Natural killer cell (primary cell): ENCODE measurements at regions of chr2 and their contacts with region 1.

Region 1: GRCh38 chr2:127701193-127701650 is at the start of gene SFT2D3:
- DNase-seq: peak; percentile 83 to 95
- ATAC-seq: peak; percentile 75 to 87 (median 76)
- H3K4me3 ChIP-seq: peak within 1 kb of the TSS; percentile 61
- H3K4me3 Mint-ChIP-seq: peak within 1 kb of the TSS; percentile 93
- H3K27ac ChIP-seq: peak within 1 kb of the TSS; percentile 94
- H3K27ac Mint-ChIP-seq: peak within 1 kb of the TSS; percentile 97 to 98
- H3K4me1 ChIP-seq: peaks cover 33% of the 10 kb centered on the region
- H3K4me1 Mint-ChIP-seq: peaks cover 35 to 36% of the 10 kb centered on the region in 2 donors
- H3K27me3 ChIP-seq: no peaks in the 10 kb centered on the region
- H3K27me3 Mint-ChIP-seq: no peaks in the 10 kb centered on the region
- CTCF ChIP-seq: no peak
- total RNA-seq, gene SFT2D3: 5.5 to 6.6 (median 6.4) TPM

Region 2: DNA sequence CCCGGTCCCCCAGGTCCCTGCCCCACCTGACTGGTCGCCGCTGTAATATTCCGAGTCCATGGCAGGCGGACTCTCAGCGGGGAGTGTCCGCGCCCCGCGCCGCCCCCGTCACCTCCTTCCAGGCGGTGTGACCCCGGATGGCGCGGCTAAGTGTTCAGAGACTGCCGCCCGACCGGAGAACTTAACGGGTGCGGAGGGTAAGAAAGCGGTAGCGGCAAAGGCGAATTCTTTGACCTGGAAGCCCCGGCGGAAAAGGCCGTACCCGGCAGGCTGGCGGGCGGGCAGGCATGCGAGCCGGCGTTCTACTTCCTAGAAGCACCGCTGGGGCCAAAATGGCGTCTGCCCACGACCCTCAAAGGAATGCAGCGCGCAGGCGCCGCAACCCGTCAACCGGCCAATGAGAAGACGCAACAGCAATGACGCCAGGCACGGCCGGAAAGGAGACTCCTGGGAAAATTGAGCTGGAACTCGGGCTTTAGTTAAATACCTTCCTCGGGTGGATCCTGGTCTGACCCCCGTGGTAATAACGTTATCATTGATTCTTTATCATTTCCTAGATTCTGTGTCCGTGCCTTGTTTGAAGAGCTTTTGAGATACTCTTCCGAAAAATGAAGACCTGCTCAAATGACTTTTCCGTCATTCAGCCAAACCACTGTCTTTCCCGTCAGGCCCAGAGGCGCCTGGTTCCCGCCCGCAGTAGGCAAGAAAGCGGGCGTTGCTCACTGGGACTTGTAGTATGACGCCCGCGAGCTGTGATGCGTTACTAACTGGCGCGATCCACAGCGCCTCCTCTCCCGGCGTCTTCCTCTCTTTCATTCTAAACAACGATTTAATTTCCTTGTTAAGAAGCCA is 174.8 kb before region 1 on chr2 and contains the start of gene IWS1:
- intact Hi-C with region 1: loop called (anchors 1 kb)
- DNase-seq: peak; percentile 90 to 98
- ATAC-seq: peak; percentile 87 to 94 (median 90)
- H3K4me3 ChIP-seq: peak within 1 kb of the TSS; percentile 87
- H3K4me3 Mint-ChIP-seq: peak within 1 kb of the TSS; percentile 93
- H3K27ac ChIP-seq: peak within 1 kb of the TSS; percentile 94
- H3K27ac Mint-ChIP-seq: peak within 1 kb of the TSS; percentile 96 to 98
- H3K4me1 ChIP-seq: peaks cover 21% of the 10 kb centered on the region
- H3K4me1 Mint-ChIP-seq: peaks cover 37 to 43% of the 10 kb centered on the region in 2 donors
- H3K27me3 ChIP-seq: peaks cover 3% of the 10 kb centered on the region
- H3K27me3 Mint-ChIP-seq: peaks cover 9 to 13% of the 10 kb centered on the region in 2 donors
- CTCF ChIP-seq: peak; percentile 25
- total RNA-seq, gene IWS1: 21.7 to 27.1 (median 23.9) TPM

Region 3: DNA sequence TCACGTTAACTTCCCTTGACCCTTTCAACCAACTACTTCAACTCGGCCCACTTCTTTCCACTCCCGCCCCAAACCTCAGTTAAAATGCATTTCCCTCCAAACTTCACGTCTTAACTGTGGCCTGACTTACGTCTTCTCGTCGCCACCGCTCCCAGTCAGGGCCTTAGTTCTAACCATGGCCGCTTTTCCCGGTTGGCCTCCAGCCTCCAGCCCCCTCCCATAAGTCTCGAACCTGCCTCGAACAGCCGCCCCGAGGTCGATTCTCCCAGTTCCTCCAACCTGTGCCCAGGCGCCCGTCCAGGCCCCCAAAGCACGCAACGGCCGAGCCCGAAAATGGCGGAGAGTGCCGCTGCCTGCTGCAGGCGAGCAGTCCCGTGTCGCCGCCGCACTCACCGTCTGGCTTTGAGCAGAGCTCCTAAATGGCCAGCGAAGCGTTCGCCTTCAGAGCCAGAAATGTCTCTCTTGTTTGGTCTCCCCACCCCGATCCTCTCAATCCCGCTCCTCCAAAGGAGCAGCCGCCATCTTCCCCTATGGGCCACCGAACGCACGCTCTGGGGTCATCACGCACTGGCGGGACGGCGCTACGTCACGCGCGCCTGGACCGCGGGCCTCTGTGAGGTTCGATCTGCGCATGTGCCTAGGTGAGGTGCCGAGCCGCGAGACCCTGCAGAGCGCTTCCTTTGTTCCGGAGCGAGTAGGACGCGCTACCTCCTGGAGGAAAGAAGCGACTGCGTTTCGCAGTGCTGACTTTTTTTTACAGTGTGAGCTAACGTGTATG is 109.6 kb after region 1 on chr2 and contains the start of gene WDR33:
- intact Hi-C with region 1: loop called (anchors 5 kb)
- DNase-seq: peak; percentile 86 to 98
- ATAC-seq: peak; percentile 92 to 97 (median 93)
- H3K4me3 ChIP-seq: peak within 1 kb of the TSS; percentile 82
- H3K4me3 Mint-ChIP-seq: peak within 1 kb of the TSS; percentile 100
- H3K27ac ChIP-seq: peak within 1 kb of the TSS; percentile 92
- H3K27ac Mint-ChIP-seq: peak within 1 kb of the TSS; percentile 100
- H3K4me1 ChIP-seq: peaks cover 22% of the 10 kb centered on the region
- H3K4me1 Mint-ChIP-seq: peaks cover 48 to 50% of the 10 kb centered on the region in 2 donors
- H3K27me3 ChIP-seq: no peaks in the 10 kb centered on the region
- H3K27me3 Mint-ChIP-seq: no peaks in the 10 kb centered on the region
- CTCF ChIP-seq: no peak
- total RNA-seq, gene WDR33: 55.2 to 78.4 (median 55.3) TPM

Region 4: GRCh38 chr2:127857265-127857808 is 156.1 kb after region 1 on chr2:
- intact Hi-C with region 1: loop called (anchors 5 kb)
- DNase-seq: peak in 1 of 2 donors; percentile 48
- ATAC-seq: no peak
- H3K4me3 ChIP-seq: peak overlapping the region; percentile 70
- H3K4me3 Mint-ChIP-seq: peak overlapping the region; percentile 92
- H3K27ac ChIP-seq: peak overlapping the region; percentile 64
- H3K27ac Mint-ChIP-seq: peak overlapping the region; percentile 82 to 89
- H3K4me1 ChIP-seq: peaks cover 33% of the 10 kb centered on the region
- H3K4me1 Mint-ChIP-seq: peaks cover 24 to 46% of the 10 kb centered on the region in 2 donors
- H3K27me3 ChIP-seq: no peaks in the 10 kb centered on the region
- H3K27me3 Mint-ChIP-seq: no peaks in the 10 kb centered on the region
- CTCF ChIP-seq: no peak

Region 5: GRCh38 chr2:128027801-128028667 is 326.8 kb after region 1 on chr2 and contains the start of gene SAP130:
- intact Hi-C with region 1: loop called (anchors 5 kb)
- DNase-seq: peak; percentile 98
- ATAC-seq: peak; percentile 76 to 89 (median 78)
- H3K4me3 ChIP-seq: peak within 1 kb of the TSS; percentile 74
- H3K4me3 Mint-ChIP-seq: peak within 1 kb of the TSS; percentile 97
- H3K27ac ChIP-seq: peak within 1 kb of the TSS; percentile 75
- H3K27ac Mint-ChIP-seq: peak within 1 kb of the TSS; percentile 85 to 96
- H3K4me1 ChIP-seq: peaks cover 7% of the 10 kb centered on the region
- H3K4me1 Mint-ChIP-seq: peaks cover 9 to 26% of the 10 kb centered on the region in 2 donors
- H3K27me3 ChIP-seq: peaks cover 2% of the 10 kb centered on the region
- H3K27me3 Mint-ChIP-seq: peaks cover 6 to 13% of the 10 kb centered on the region in 2 donors
- CTCF ChIP-seq: no peak
- total RNA-seq, gene SAP130: 33.6 to 43.7 (median 36.2) TPM

Region 6: GRCh38 chr2:128090945-128091725 is 389.9 kb after region 1 on chr2 and contains the start of gene UGGT1:
- intact Hi-C with region 1: loop called (anchors 5 kb)
- DNase-seq: peak; percentile 89 to 98
- ATAC-seq: peak; percentile 94 to 99 (median 95)
- H3K4me3 ChIP-seq: peak within 1 kb of the TSS; percentile 94
- H3K4me3 Mint-ChIP-seq: peak within 1 kb of the TSS; percentile 96
- H3K27ac ChIP-seq: peak within 1 kb of the TSS; percentile 85
- H3K27ac Mint-ChIP-seq: peak within 1 kb of the TSS; percentile 94 to 96
- H3K4me1 ChIP-seq: peaks cover 6% of the 10 kb centered on the region
- H3K4me1 Mint-ChIP-seq: peaks cover 41 to 46% of the 10 kb centered on the region in 2 donors
- H3K27me3 ChIP-seq: no peaks in the 10 kb centered on the region
- H3K27me3 Mint-ChIP-seq: peaks cover 0 to 3% of the 10 kb centered on the region in 2 donors
- CTCF ChIP-seq: no peak
- total RNA-seq, gene UGGT1: 48.2 to 70.3 (median 60.7) TPM